CD8-positive, alpha-beta T cell (primary cell): ENCODE measurements at regions of chr2 and their contacts with region 1.

Region 1: DNA sequence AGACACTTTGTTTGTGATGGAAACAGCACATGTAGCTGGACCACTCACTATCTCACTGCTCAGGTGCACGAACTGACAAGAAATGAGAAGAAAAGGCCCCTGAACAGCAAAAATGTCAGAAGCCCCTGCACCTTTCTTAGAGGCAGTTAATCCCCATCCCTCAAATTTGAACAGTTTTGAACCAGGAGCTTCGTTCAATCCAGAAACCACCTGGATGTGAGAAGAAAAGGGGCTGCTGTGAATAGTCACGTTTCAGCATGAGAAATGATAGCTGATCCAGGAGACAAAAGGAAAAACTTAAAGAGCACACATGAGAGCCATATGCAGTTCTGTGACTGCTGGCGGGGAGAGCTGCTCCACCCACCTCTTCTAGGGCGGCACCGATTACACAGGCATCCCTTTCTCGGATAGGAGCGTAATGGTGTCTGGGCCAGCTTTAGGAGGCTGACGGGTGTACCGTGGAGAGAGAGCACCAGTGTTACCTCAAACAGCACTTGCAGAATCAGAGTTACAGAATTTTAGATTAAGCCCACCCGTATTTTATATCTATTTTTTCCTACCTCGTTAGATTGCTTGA is 117.0 kb upstream of the EML6 start:
- DNase-seq: peak in 4 of 9 experiments; percentile 17 to 54 (median 44)
- ATAC-seq: peak; percentile 79
- H3K4me3 ChIP-seq: no peak overlapping the region
- H3K4me3 Mint-ChIP-seq: peak overlapping the region; percentile 13
- H3K27ac ChIP-seq: no peak overlapping the region
- H3K27ac Mint-ChIP-seq: peak overlapping the region; percentile 92
- H3K4me1 ChIP-seq: peaks cover 77% of the 10 kb centered on the region
- H3K4me1 Mint-ChIP-seq: peaks cover 86% of the 10 kb centered on the region
- H3K27me3 ChIP-seq: no peaks in the 10 kb centered on the region
- H3K27me3 Mint-ChIP-seq: no peaks in the 10 kb centered on the region
- CTCF ChIP-seq: no peak

Region 2: DNA sequence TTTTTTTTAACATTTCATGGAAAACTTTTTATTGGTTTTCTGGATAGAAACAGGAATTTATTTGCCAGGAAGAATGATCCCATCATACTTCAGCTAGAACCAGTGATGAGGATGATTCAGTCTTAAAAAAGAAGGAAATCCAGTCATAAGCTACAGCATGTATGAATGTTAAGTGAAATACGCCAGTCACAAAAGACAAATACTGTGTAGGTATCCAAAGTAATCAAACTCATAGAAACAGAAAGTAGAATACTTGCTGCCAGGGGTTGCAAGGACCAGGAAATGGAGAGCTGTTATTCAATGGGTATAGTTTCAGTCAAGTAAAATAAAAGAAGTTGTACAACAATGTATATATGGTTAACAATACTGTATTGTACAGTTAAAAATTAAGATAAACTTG is 657.0 kb before region 1 on chr2:
- CTCF ChIA-PET with region 1: no interaction called
- POLR2A ChIA-PET with region 1: no interaction called
- intact Hi-C with region 1: no loop called
- DNase-seq: no peak
- ATAC-seq: no peak
- H3K4me3 ChIP-seq: no peak overlapping the region
- H3K4me3 Mint-ChIP-seq: no peak overlapping the region
- H3K27ac ChIP-seq: no peak overlapping the region
- H3K27ac Mint-ChIP-seq: peak overlapping the region; percentile 4
- H3K4me1 ChIP-seq: peaks cover 8% of the 10 kb centered on the region
- H3K4me1 Mint-ChIP-seq: peaks cover 49% of the 10 kb centered on the region
- H3K27me3 ChIP-seq: no peaks in the 10 kb centered on the region
- H3K27me3 Mint-ChIP-seq: no peaks in the 10 kb centered on the region
- CTCF ChIP-seq: no peak

Region 3: GRCh38 chr2:54589340-54590215 is 16.9 kb before region 1 on chr2:
- CTCF ChIA-PET with region 1: interaction called, 4 read pairs
- POLR2A ChIA-PET with region 1: interaction called, 7 read pairs
- intact Hi-C with region 1: loop called in 1 of 2 experiments (anchors 1 kb)
- DNase-seq: peak in 5 of 9 experiments; percentile 43 to 71 (median 48)
- ATAC-seq: peak; percentile 59
- H3K4me3 ChIP-seq: peak overlapping the region in 1 of 2 experiments; percentile 46
- H3K4me3 Mint-ChIP-seq: peak overlapping the region; percentile 72
- H3K27ac ChIP-seq: peak overlapping the region; percentile 60
- H3K27ac Mint-ChIP-seq: peak overlapping the region; percentile 92
- H3K4me1 ChIP-seq: peaks cover 88% of the 10 kb centered on the region
- H3K4me1 Mint-ChIP-seq: peaks cover 96% of the 10 kb centered on the region
- H3K27me3 ChIP-seq: no peaks in the 10 kb centered on the region
- H3K27me3 Mint-ChIP-seq: no peaks in the 10 kb centered on the region
- CTCF ChIP-seq: no peak